ENCODE measurements at regions of chr1 and their contacts with region 1.

Region 1: DNA sequence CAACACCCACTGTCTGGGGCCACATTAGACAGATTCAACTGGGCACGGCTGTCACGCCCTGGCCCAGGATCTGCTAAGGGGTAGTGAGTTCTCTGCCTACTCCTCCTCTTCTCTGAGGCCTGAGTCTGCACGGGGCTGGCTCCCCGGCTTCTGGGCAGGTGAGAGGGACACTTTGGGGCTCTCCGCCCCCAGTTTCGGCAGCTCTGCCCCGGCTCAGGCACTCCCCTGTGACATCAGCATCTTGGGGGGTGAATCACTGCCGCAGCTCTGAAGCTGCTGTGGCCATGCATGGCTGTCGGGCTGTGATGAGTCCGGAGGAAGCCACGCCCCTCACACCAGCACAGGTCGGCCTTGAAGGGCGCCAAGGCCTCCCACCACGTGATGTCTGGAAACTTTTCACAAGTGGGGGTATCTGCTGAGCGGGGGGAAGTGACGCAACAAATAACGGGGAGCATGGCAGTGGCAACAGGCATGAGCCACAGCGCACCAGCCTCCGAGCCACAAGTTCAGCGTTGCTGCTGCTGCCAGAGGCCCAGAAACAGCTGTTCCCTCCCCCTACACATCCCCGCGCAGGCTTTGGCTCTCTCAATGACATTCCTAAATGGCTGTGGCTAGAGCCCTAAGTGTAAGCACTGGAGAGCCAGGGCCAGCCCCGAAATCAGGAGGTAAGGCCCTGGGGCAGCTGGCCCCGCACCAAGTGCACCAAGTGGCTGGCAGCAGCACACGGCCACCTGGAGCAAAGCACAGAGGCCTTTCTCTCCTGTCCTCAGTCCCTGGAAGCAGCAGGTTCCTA is 26.3 kb downstream of the ZBTB17 start:
- DNase-seq: peak; percentile 62
- ATAC-seq: peak; percentile 82
- H3K4me3 Mint-ChIP-seq: peak overlapping the region; percentile 67
- H3K27ac Mint-ChIP-seq: peak overlapping the region; percentile 89
- H3K4me1 Mint-ChIP-seq: peaks cover 73% of the 10 kb centered on the region
- H3K27me3 Mint-ChIP-seq: no peaks in the 10 kb centered on the region
- CTCF ChIP-seq: no peak

Region 2: DNA sequence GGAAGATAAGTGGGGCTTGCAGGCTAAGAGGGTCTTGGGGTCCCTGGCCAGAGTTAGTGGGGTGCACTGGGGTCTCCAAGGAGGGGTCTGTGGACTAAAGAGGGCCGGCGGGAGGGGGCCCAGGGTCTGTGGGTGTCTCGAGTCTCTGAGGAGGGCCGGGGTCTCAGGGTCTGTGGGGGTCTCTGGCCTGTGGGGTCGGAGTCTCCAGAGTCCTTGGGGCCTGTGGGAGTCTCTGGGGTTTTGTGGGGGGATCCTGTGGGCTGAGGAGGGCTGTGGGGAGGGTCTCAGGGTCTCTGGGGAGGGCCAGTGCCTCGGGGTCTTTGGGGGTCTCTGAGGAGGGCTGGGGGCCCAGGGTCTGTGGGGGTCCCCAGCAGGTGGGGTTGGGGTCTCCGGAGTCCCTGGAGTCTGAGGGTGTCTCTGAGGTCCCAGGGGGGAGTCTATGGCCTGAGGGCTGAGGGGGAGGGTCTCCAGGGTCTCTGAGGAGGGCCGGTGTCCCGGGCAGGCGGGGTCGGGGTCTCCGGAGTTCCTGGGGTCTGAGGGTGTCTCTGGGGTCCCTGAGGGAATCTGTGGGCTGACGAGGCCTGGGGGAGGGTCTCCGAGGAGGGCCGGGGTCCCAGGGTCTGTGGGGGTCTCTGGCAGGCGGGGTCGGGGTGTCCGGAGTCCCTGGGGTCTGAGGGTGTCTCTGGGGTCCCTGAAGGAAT is 266.2 kb before region 1 on chr1:
- CTCF ChIA-PET with region 1: no interaction called
- POLR2A ChIA-PET with region 1: no interaction called
- intact Hi-C with region 1: no loop called
- DNase-seq: no peak
- ATAC-seq: no peak
- H3K4me3 Mint-ChIP-seq: peak overlapping the region; percentile 80
- H3K27ac Mint-ChIP-seq: peak overlapping the region; percentile 91
- H3K4me1 Mint-ChIP-seq: peaks cover 76% of the 10 kb centered on the region
- H3K27me3 Mint-ChIP-seq: no peaks in the 10 kb centered on the region
- CTCF ChIP-seq: no peak

Region 3: GRCh38 chr1:15723631-15724251 is 225.9 kb before region 1 on chr1:
- CTCF ChIA-PET with region 1: no interaction called
- POLR2A ChIA-PET with region 1: no interaction called
- intact Hi-C with region 1: no loop called
- DNase-seq: no peak
- ATAC-seq: no peak
- H3K4me3 Mint-ChIP-seq: no peak overlapping the region
- H3K27ac Mint-ChIP-seq: no peak overlapping the region
- H3K4me1 Mint-ChIP-seq: no peaks in the 10 kb centered on the region
- H3K27me3 Mint-ChIP-seq: no peaks in the 10 kb centered on the region
- CTCF ChIP-seq: no peak

Region 4: GRCh38 chr1:15994590-15995351 is 45.1 kb after region 1 on chr1:
- CTCF ChIA-PET with region 1: interaction called, 3 read pairs
- POLR2A ChIA-PET with region 1: no interaction called
- intact Hi-C with region 1: loop called (anchors 5 kb)
- DNase-seq: no peak
- ATAC-seq: peak; percentile 94
- H3K4me3 Mint-ChIP-seq: no peak overlapping the region
- H3K27ac Mint-ChIP-seq: no peak overlapping the region
- H3K4me1 Mint-ChIP-seq: no peaks in the 10 kb centered on the region
- H3K27me3 Mint-ChIP-seq: no peaks in the 10 kb centered on the region
- CTCF ChIP-seq: no peak

Region 5: DNA sequence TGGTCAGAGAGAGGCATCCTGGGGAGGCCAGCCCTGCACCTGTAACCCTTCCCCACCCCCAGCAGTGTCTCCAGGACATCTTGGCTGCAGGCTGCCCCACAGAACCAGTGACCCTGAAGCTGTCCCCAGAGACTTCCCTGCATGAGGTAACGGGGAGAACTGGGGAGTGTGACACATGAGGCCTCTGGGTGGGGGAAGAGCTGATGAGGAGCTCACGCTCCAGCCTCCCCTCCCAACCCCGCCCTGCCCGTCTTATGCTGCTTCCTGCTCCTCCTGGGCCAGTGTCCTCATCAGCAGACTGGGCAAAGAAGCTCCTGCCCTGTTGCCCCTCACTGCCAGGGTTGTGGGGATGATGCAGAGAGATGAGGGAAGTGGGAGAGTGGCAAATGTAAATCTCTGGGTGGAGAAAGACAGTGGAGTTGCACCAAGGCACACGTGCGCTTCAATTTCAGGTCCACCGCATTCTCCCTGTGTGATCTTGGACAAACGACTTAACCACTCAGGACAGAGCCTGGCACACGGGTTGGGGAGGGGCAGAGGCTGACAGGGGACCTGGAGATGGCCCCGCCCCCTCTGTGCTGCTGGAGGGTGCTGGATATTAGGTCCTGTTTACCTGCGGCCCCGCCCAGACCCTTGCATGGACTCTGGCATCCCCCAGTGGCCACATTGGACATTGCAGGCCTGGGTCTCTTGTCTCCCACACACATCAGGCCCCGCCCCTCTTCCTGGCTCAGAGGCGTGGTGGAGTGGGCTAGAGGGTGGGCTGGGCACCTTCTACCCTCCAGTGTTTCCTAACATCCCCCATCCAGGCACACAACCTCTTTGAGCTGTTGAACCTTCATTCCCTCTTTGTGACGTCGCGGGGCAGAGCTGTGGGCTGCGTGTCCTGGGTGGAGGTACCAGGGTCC is 106.2 kb after region 1 on chr1:
- CTCF ChIA-PET with region 1: no interaction called
- POLR2A ChIA-PET with region 1: no interaction called
- intact Hi-C with region 1: loop called (anchors 10 kb)
- DNase-seq: peak; percentile 77
- ATAC-seq: peak; percentile 100
- H3K4me3 Mint-ChIP-seq: no peak overlapping the region
- H3K27ac Mint-ChIP-seq: no peak overlapping the region
- H3K4me1 Mint-ChIP-seq: peaks cover 6% of the 10 kb centered on the region
- H3K27me3 Mint-ChIP-seq: peaks cover 6% of the 10 kb centered on the region
- CTCF ChIP-seq: no peak

Measured in activated B cell treated with CpG ODN at 0.5 μM for 24 hours (primary cell).